Endothelial cell of umbilical vein (primary cell): ENCODE measurements at regions of chr12 and their contacts with region 1.

Region 1: GRCh38 chr12:27305673-27306456 is 26.8 kb upstream of the BMAL2 start:
- DNase-seq: peak; percentile 64
- H3K4me3 ChIP-seq: no peak overlapping the region
- H3K27ac ChIP-seq: no peak overlapping the region
- H3K4me1 ChIP-seq: peaks cover 6% of the 10 kb centered on the region
- H3K27me3 ChIP-seq: no peaks in the 10 kb centered on the region
- CTCF ChIP-seq: peak in 1 of 2 donors; percentile 12
- POLR2A ChIP-seq: no peak

Region 2: GRCh38 chr12:26884765-26885576 is 420.9 kb before region 1 on chr12:
- CTCF ChIA-PET with region 1: interaction called, 33 read pairs
- POLR2A ChIA-PET with region 1: no interaction called
- dilution Hi-C with region 1: no loop called
- intact Hi-C with region 1: no loop called
- DNase-seq: peak; percentile 83
- H3K4me3 ChIP-seq: no peak overlapping the region
- H3K27ac ChIP-seq: no peak overlapping the region
- H3K4me1 ChIP-seq: peaks cover 2% of the 10 kb centered on the region
- H3K27me3 ChIP-seq: no peaks in the 10 kb centered on the region
- CTCF ChIP-seq: peak; percentile 88 to 90
- POLR2A ChIP-seq: no peak

Region 3: GRCh38 chr12:27034607-27035293 is 271.1 kb before region 1 on chr12:
- CTCF ChIA-PET with region 1: interaction called, 65 read pairs
- POLR2A ChIA-PET with region 1: no interaction called
- dilution Hi-C with region 1: no loop called
- intact Hi-C with region 1: loop called (anchors 1 kb)
- DNase-seq: no peak
- H3K4me3 ChIP-seq: no peak overlapping the region
- H3K27ac ChIP-seq: no peak overlapping the region
- H3K4me1 ChIP-seq: no peaks in the 10 kb centered on the region
- H3K27me3 ChIP-seq: no peaks in the 10 kb centered on the region
- CTCF ChIP-seq: no peak
- POLR2A ChIP-seq: no peak

Region 4: DNA sequence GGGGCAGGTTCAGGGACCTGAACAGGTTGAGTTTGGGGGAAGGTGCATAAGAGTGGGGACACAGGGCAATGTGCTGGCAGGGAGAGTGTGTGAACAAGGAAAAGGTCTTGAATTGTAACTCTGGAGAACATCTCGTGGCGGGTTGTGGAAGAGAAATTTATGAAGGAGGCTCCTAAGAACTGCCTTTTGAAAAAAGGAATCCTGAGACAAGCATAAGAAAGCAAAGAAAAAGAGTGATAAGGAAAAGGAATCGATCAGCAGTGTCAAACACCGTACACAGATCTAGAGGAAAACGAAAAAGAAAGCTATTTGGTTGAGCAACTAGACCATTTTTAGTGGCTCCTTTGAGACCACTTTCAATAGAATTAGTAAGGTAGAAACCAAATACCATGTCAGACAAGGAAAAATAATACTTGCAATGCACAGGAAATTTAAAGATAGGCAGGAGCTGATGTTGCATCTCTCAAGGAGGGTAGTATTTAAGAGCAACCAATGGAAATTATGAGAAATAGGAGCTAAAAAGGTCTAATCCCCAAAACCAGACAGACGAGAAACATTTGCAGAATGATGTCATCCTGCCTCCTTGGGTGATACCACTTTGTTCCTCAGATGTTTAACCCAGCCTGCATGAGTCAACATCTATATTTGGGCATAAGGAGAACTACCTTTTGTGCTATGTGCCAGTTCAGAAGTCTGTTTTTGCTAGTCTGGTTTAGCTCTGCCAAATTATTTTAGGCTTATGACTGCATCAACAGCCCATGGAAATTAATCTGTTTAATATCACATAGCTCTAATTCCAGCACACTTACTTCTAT is 126.3 kb before region 1 on chr12:
- CTCF ChIA-PET with region 1: interaction called, 10 read pairs
- POLR2A ChIA-PET with region 1: no interaction called
- dilution Hi-C with region 1: no loop called
- intact Hi-C with region 1: no loop called
- DNase-seq: peak; percentile 89
- H3K4me3 ChIP-seq: no peak overlapping the region
- H3K27ac ChIP-seq: peak overlapping the region; percentile 72
- H3K4me1 ChIP-seq: peaks cover 44% of the 10 kb centered on the region
- H3K27me3 ChIP-seq: no peaks in the 10 kb centered on the region
- CTCF ChIP-seq: no peak
- POLR2A ChIP-seq: no peak

Region 5: GRCh38 chr12:27260746-27261145 is 45.1 kb before region 1 on chr12:
- CTCF ChIA-PET with region 1: interaction called, 22 read pairs
- POLR2A ChIA-PET with region 1: no interaction called
- dilution Hi-C with region 1: no loop called
- intact Hi-C with region 1: no loop called
- DNase-seq: peak; percentile 30
- H3K4me3 ChIP-seq: no peak overlapping the region
- H3K27ac ChIP-seq: no peak overlapping the region
- H3K4me1 ChIP-seq: peaks cover 15% of the 10 kb centered on the region
- H3K27me3 ChIP-seq: no peaks in the 10 kb centered on the region
- CTCF ChIP-seq: no peak
- POLR2A ChIP-seq: no peak

Region 6: DNA sequence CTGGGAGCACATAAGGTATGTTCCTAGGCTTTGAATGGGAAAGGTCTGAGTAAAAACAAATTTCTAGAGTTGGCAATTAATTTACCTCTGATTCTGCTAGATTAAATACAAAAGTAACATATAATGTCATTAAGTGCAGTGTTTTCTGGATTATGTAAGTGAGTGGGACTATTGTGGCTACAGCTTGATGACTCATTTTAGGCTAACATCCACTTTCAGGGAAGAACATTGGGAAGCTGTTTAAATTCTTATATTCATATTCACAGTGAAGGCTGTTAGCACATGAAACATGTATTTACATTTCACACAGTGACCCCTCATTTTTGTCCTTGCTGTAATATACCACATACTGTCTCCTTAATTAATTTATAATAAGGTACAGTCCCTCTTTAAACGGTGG is 13.5 kb after region 1 on chr12:
- CTCF ChIA-PET with region 1: interaction called, 59 read pairs
- POLR2A ChIA-PET with region 1: no interaction called
- dilution Hi-C with region 1: no loop called
- intact Hi-C with region 1: no loop called
- DNase-seq: no peak
- H3K4me3 ChIP-seq: no peak overlapping the region
- H3K27ac ChIP-seq: no peak overlapping the region
- H3K4me1 ChIP-seq: no peaks in the 10 kb centered on the region
- H3K27me3 ChIP-seq: no peaks in the 10 kb centered on the region
- CTCF ChIP-seq: no peak
- POLR2A ChIP-seq: no peak

Region 7: DNA sequence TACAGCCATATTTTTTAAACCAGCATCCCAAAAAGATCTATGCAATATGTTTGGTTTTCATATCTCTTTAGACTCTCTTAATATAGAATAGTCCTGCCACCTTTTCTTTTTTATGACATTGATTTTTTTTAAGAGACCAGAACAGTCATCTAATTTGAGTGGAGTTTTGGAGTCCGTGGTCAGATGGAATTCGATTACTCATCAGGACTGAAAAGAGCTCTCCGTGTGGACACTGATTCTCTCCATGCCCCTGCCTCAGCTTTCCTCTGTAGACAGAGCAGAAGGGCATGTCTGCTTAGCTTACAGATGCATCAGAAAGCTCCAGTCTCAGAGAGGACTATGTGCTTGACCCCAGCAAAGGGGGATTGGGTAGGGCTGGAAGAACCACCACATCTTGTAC is 168.5 kb after region 1 on chr12:
- CTCF ChIA-PET with region 1: no interaction called
- POLR2A ChIA-PET with region 1: no interaction called
- dilution Hi-C with region 1: no loop called
- intact Hi-C with region 1: no loop called
- DNase-seq: no peak
- H3K4me3 ChIP-seq: no peak overlapping the region
- H3K27ac ChIP-seq: no peak overlapping the region
- H3K4me1 ChIP-seq: no peaks in the 10 kb centered on the region
- H3K27me3 ChIP-seq: no peaks in the 10 kb centered on the region
- CTCF ChIP-seq: no peak
- POLR2A ChIP-seq: no peak